CD8-positive, alpha-beta T cell (primary cell): ENCODE measurements at regions of chr16 and their contacts with region 1.

Region 1: DNA sequence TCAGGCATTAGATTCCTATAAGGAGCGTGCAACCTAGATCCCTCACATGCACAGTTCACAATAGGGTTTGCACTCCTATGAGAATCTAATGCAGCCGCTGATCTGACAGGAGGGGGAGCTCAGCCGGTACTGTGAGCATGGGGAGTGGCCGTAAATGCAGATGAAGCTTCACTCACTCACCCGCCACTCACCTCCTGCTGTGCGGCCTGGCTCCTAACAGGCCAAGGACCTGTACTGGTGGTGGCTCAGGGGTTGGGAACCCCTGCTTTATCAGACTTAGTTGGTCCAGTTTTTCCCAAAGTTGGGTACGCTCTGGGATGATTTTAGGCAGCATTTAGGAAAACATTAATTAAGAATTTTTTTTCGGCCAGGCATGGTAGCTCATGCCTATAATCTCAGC is 103.8 kb downstream of the MARF1 start:
- DNase-seq: no peak
- ATAC-seq: no peak
- H3K4me3 ChIP-seq: no peak overlapping the region
- H3K4me3 Mint-ChIP-seq: no peak overlapping the region
- H3K27ac ChIP-seq: no peak overlapping the region
- H3K27ac Mint-ChIP-seq: no peak overlapping the region
- H3K4me1 ChIP-seq: no peaks in the 10 kb centered on the region
- H3K4me1 Mint-ChIP-seq: no peaks in the 10 kb centered on the region
- H3K27me3 ChIP-seq: no peaks in the 10 kb centered on the region
- H3K27me3 Mint-ChIP-seq: no peaks in the 10 kb centered on the region
- CTCF ChIP-seq: no peak

Region 2: GRCh38 chr16:15477802-15478201 is 61.4 kb before region 1 on chr16:
- CTCF ChIA-PET with region 1: no interaction called
- POLR2A ChIA-PET with region 1: no interaction called
- intact Hi-C with region 1: loop called in 1 of 2 experiments (anchors 10 kb)
- DNase-seq: no peak
- ATAC-seq: no peak
- H3K4me3 ChIP-seq: no peak overlapping the region
- H3K4me3 Mint-ChIP-seq: no peak overlapping the region
- H3K27ac ChIP-seq: no peak overlapping the region
- H3K27ac Mint-ChIP-seq: no peak overlapping the region
- H3K4me1 ChIP-seq: no peaks in the 10 kb centered on the region
- H3K4me1 Mint-ChIP-seq: no peaks in the 10 kb centered on the region
- H3K27me3 ChIP-seq: no peaks in the 10 kb centered on the region
- H3K27me3 Mint-ChIP-seq: no peaks in the 10 kb centered on the region
- CTCF ChIP-seq: no peak